ENCODE measurements at regions of chr12 and their contacts with region 1.

Region 1: GRCh38 chr12:122399592-122400373 is 22.7 kb downstream of the CLIP1 start:
- DNase-seq: peak; percentile 38
- H3K4me3 Mint-ChIP-seq: peak overlapping the region; percentile 65
- H3K27ac Mint-ChIP-seq: peak overlapping the region; percentile 66
- H3K4me1 Mint-ChIP-seq: peaks cover 30% of the 10 kb centered on the region
- H3K27me3 Mint-ChIP-seq: no peaks in the 10 kb centered on the region

Region 2: DNA sequence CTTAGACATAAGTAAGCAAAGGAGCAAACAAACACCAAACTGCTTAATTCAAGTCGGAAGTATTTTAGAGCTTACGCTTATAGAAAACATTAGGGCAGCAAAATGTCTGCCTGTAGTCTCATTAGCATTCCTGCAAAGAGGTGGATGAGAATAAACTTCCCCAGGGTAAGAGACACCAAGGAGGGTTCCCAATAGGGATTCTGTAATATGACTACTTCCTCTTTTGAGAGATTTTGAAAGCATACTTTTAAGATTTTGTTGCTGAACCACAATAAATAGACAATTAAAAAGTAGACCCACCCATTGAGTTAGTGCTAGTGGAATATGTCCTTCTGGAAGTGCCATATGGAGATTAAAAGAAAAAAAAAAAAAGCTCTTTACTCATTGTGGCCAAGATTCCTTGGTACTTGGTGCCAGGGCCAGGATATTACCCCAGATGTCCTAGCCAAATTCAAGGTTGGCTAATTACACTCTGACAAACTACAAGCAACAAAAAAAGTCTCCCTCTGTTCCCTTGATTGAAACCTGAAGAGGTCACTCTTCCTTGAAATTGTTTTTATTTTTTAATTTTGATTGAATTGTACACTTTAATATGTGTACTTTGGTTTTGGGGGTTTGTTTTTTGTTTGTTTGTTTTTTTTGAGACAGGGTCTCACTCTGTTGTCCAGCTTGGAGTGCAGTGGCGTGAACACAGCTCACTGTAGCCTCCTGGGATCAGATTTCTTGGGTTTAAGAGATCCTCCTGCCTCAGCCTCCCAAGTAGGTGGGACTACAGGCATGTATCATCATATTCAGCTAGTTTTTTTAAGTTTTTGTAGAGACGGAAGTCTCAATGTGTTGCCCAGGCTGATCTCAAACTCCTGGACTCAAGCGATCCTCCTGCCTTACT is 14.0 kb after region 1 on chr12:
- intact Hi-C with region 1: loop called (anchors 1 kb)
- DNase-seq: no peak
- H3K4me3 Mint-ChIP-seq: peak overlapping the region; percentile 64
- H3K27ac Mint-ChIP-seq: peak overlapping the region; percentile 91
- H3K4me1 Mint-ChIP-seq: peaks cover 34% of the 10 kb centered on the region
- H3K27me3 Mint-ChIP-seq: no peaks in the 10 kb centered on the region

Region 3: DNA sequence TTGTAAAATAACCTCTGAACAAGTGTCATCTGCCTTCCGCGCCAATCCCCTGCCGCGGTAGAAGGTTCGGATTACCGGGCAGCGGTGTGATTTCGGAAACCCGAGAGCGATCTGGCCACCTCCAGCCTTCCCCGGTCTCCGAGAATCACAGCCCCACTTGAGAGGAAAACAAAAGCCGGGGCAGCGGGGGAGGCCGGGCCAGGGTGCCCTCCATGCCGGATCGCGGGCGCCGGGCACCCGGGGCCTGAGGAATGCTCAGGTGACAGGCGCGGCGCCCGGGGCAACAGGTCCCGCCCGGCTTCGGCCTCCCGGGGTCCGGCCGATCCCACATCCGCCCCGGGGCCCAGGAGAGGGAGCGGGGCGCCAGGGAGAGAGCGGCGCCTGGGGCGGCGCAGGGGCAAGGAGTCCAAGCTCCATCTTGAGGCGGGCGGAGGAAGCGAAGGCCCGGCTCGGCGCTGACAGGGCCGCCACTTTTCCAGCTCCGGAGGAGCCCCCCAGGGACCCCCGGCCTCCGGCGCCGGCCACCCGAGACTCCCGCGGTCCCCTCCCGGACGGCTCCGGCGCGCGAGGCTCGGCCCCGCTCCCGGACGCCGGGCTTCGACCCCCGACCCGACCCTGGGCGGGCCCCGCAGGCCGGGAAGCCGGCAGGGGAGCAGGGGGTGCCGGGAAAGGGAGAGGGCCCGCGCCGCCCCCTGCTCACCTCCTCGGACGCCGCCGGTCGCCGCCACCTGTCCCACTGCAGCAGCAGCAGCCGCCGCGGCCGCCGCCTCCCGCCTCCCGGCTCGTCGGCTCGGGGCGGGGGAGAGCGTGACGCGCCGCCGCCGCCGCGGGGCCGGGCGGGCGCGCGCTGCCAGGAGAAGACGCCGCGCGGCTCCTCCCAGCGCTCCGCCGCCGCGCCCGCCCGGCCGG is 22.3 kb after region 1 on chr12 and contains the start of gene CLIP1:
- intact Hi-C with region 1: loop called (anchors 1 kb)
- DNase-seq: peak; percentile 57
- H3K4me3 Mint-ChIP-seq: peak within 1 kb of the TSS; percentile 94
- H3K27ac Mint-ChIP-seq: peak within 1 kb of the TSS; percentile 89
- H3K4me1 Mint-ChIP-seq: peaks cover 33% of the 10 kb centered on the region
- H3K27me3 Mint-ChIP-seq: peaks cover 2% of the 10 kb centered on the region
- total RNA-seq, gene CLIP1: 64.1 and 71.9 TPM in 2 replicates

Region 4: GRCh38 chr12:122452701-122453285 is 53.0 kb after region 1 on chr12:
- intact Hi-C with region 1: loop called (anchors 1 kb)
- DNase-seq: no peak
- H3K4me3 Mint-ChIP-seq: peak overlapping the region; percentile 78
- H3K27ac Mint-ChIP-seq: peak overlapping the region; percentile 98
- H3K4me1 Mint-ChIP-seq: peaks cover 38% of the 10 kb centered on the region
- H3K27me3 Mint-ChIP-seq: no peaks in the 10 kb centered on the region

Region 5: DNA sequence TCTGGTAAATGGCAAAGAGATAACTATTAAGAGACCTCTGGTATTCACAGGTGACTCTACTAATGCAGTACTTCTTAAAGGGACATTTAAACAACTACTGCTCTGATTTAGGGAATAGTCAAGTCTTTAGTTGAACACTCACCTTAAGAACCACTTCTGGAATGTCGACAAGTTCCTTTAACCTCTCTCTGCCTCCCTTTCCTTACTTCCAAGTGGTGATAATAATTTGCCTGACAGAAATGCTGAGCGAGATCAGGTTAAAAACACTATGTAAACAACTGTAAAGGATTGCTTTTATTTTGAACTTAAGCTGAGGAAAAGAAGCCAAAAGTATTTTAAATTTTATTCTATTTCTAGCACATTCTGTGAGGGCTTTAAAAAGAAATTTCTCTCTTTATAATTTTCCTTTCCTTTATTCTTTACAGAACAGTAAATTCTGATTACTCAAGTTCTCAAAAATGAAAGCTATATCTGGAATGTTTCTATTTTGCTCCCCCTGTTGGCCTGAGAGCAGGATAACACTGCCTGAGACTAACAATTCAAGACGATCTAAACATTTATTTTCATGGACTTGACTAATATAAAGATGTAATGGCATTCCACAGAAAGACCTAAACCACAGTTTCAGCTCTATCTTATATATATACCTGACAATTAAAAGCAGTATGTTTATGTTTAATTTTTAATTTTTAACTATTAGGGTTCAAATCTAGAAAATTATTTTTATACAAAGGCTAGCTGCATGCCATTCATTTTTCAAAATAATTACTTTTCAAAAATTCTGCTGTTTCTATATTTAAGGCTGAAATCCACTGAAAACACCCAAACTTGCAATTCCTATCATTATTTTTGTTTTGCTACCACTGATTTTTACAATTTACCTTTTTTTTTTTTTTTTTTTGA is 71.8 kb after region 1 on chr12:
- intact Hi-C with region 1: loop called (anchors 1 kb)
- DNase-seq: no peak
- H3K4me3 Mint-ChIP-seq: no peak overlapping the region
- H3K27ac Mint-ChIP-seq: no peak overlapping the region
- H3K4me1 Mint-ChIP-seq: peaks cover 27% of the 10 kb centered on the region
- H3K27me3 Mint-ChIP-seq: no peaks in the 10 kb centered on the region

Region 6: GRCh38 chr12:122533856-122534255 is 134.1 kb after region 1 on chr12:
- intact Hi-C with region 1: no loop called
- DNase-seq: no peak
- H3K4me3 Mint-ChIP-seq: no peak overlapping the region
- H3K27ac Mint-ChIP-seq: no peak overlapping the region
- H3K4me1 Mint-ChIP-seq: peaks cover 17% of the 10 kb centered on the region
- H3K27me3 Mint-ChIP-seq: no peaks in the 10 kb centered on the region

Region 7: GRCh38 chr12:122752464-122753318 is 352.9 kb after region 1 on chr12 and contains the start of gene DENR:
- intact Hi-C with region 1: loop called (anchors 1 kb)
- DNase-seq: peak; percentile 100
- H3K4me3 Mint-ChIP-seq: peak within 1 kb of the TSS; percentile 91
- H3K27ac Mint-ChIP-seq: peak within 1 kb of the TSS; percentile 92
- H3K4me1 Mint-ChIP-seq: peaks cover 54% of the 10 kb centered on the region
- H3K27me3 Mint-ChIP-seq: no peaks in the 10 kb centered on the region
- total RNA-seq, gene DENR: 87.6 and 88.7 TPM in 2 replicates

Region 8: GRCh38 chr12:123021688-123022604 is 622.2 kb after region 1 on chr12:
- intact Hi-C with region 1: no loop called
- DNase-seq: no peak
- H3K4me3 Mint-ChIP-seq: no peak overlapping the region
- H3K27ac Mint-ChIP-seq: peak overlapping the region; percentile 26
- H3K4me1 Mint-ChIP-seq: peaks cover 17% of the 10 kb centered on the region
- H3K27me3 Mint-ChIP-seq: no peaks in the 10 kb centered on the region

Measured in activated T-helper 1 cell treated with anti-CD3 and anti-CD28 coated beads, Interleukin-12 subunit alpha, Interleukin-12 subunit beta, Interleukin-2, Interleukin-4 antibody, amounts not matched to agents 30 ng/mL and 10 ng/mL and 1 ng/mL, durations not matched to agents 14 hours and 24 hours and 36 hours (primary cell).